ENCODE measurements at regions of chr3 and their contacts with region 1.

Region 1: GRCh38 chr3:52339612-52340011 is 23.5 kb downstream of the DNAH1 start:
- DNase-seq: peak in 13 of 14 experiments; percentile 7 to 87 (median 28)
- ATAC-seq: peak; percentile 76
- H3K4me3 ChIP-seq: no peak overlapping the region
- H3K4me3 Mint-ChIP-seq: no peak overlapping the region
- H3K27ac ChIP-seq: no peak overlapping the region
- H3K27ac Mint-ChIP-seq: no peak overlapping the region
- H3K4me1 ChIP-seq: no peaks in the 10 kb centered on the region
- H3K4me1 Mint-ChIP-seq: peaks cover 11% of the 10 kb centered on the region
- H3K27me3 ChIP-seq: no peaks in the 10 kb centered on the region
- H3K27me3 Mint-ChIP-seq: no peaks in the 10 kb centered on the region
- CTCF ChIP-seq: peak; percentile 85

Region 2: DNA sequence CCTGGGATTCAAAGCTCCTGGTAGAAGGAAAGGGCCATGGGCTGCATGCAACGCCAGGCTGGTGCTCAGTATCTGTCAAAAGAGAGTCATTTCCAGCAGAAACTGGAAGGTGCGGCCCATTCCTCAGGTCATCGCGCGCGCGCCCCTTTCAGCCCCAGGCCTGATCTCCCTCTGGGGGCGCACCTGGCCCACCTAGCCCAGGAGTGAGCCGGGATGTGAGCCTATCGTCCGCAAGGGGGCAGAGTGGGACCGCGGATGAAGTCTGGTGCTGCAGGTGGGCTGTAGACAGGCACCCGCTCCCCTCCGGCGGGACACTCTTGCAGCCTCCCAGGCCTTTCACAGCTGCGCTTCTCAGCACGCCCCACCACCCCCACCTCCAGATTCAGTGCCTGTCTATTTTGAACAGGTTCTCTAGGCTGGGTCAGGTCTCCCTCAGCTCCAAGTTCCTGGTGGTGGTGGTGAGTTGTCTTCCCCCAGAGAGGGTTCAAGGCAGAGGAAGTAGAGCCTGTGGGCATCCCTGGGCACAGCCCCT is 338.1 kb before region 1 on chr3:
- CTCF ChIA-PET with region 1: no interaction called
- POLR2A ChIA-PET with region 1: no interaction called
- intact Hi-C with region 1: loop called in 1 of 2 experiments (anchors 1 kb)
- DNase-seq: peak; percentile 78 to 92 (median 82)
- ATAC-seq: peak; percentile 99
- H3K4me3 ChIP-seq: no peak overlapping the region
- H3K4me3 Mint-ChIP-seq: peak overlapping the region; percentile 25
- H3K27ac ChIP-seq: no peak overlapping the region
- H3K27ac Mint-ChIP-seq: peak overlapping the region; percentile 20
- H3K4me1 ChIP-seq: peaks cover 22% of the 10 kb centered on the region
- H3K4me1 Mint-ChIP-seq: peaks cover 17% of the 10 kb centered on the region
- H3K27me3 ChIP-seq: no peaks in the 10 kb centered on the region
- H3K27me3 Mint-ChIP-seq: no peaks in the 10 kb centered on the region
- CTCF ChIP-seq: peak; percentile 96

Region 3: GRCh38 chr3:52225452-52226228 is 114.0 kb before region 1 on chr3 and contains the start of gene TLR9:
- CTCF ChIA-PET with region 1: interaction called, 60 read pairs
- POLR2A ChIA-PET with region 1: interaction called, 13 read pairs
- intact Hi-C with region 1: loop called (anchors 1 kb)
- DNase-seq: peak in 5 of 14 experiments; percentile 33 to 62 (median 44)
- ATAC-seq: peak; percentile 59
- H3K4me3 ChIP-seq: no peak within 1 kb of the TSS
- H3K4me3 Mint-ChIP-seq: peak within 1 kb of the TSS; percentile 73
- H3K27ac ChIP-seq: peak within 1 kb of the TSS; percentile 51 to 64
- H3K27ac Mint-ChIP-seq: peak within 1 kb of the TSS; percentile 90
- H3K4me1 ChIP-seq: peaks cover 76% of the 10 kb centered on the region
- H3K4me1 Mint-ChIP-seq: peaks cover 68% of the 10 kb centered on the region
- H3K27me3 ChIP-seq: no peaks in the 10 kb centered on the region
- H3K27me3 Mint-ChIP-seq: no peaks in the 10 kb centered on the region
- CTCF ChIP-seq: no peak
- total RNA-seq, gene TLR9: 0.08 to 0.17 TPM

Region 4: DNA sequence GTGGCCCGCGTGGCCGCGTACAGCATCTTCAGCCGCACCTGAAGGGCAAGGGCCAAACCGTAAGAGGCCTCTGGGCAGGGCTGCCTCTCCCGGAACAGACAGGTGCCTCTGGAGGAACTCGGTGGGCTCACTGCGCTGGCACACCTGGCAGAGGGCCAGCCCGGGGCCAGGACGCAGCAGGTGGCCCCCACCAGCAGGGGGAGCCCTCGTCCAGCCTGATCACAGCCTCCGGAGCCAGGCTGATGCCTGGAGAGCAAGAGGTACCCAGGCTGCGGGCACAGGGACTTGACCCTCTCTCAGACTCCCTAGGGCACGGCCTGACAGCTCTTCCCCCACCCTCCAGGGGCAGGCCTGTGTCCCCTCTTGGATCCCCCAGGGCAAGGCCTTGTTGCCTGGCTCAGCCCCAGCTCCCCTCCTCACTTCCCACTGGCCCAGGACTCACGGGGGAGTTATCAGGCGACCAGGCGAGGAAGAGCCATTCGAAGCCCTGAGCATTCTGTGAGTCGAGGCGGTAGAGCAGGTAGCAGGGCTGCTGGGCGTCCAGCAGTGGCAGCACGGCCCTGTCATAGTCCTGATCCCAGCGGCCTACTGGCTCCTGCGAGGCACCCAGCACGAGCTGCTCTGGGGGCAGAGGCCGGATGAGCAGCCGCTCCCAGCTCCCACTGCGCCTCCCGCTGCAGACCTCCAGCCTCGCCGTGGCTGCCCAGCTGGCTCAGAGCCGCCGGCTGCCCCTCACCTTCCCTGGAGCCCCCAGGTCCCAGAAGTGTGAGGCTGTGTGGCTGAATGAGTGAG is 107.9 kb before region 1 on chr3:
- CTCF ChIA-PET with region 1: interaction called, 60 read pairs
- POLR2A ChIA-PET with region 1: interaction called, 9 read pairs
- intact Hi-C with region 1: loop called (anchors 1 kb)
- DNase-seq: peak; percentile 70 to 94 (median 88)
- ATAC-seq: peak; percentile 75
- H3K4me3 ChIP-seq: no peak overlapping the region
- H3K4me3 Mint-ChIP-seq: peak overlapping the region; percentile 30
- H3K27ac ChIP-seq: peak overlapping the region in 1 of 2 donors; percentile 43
- H3K27ac Mint-ChIP-seq: peak overlapping the region; percentile 72
- H3K4me1 ChIP-seq: peaks cover 73% of the 10 kb centered on the region
- H3K4me1 Mint-ChIP-seq: peaks cover 56% of the 10 kb centered on the region
- H3K27me3 ChIP-seq: no peaks in the 10 kb centered on the region
- H3K27me3 Mint-ChIP-seq: no peaks in the 10 kb centered on the region
- CTCF ChIP-seq: peak; percentile 67

Region 5: DNA sequence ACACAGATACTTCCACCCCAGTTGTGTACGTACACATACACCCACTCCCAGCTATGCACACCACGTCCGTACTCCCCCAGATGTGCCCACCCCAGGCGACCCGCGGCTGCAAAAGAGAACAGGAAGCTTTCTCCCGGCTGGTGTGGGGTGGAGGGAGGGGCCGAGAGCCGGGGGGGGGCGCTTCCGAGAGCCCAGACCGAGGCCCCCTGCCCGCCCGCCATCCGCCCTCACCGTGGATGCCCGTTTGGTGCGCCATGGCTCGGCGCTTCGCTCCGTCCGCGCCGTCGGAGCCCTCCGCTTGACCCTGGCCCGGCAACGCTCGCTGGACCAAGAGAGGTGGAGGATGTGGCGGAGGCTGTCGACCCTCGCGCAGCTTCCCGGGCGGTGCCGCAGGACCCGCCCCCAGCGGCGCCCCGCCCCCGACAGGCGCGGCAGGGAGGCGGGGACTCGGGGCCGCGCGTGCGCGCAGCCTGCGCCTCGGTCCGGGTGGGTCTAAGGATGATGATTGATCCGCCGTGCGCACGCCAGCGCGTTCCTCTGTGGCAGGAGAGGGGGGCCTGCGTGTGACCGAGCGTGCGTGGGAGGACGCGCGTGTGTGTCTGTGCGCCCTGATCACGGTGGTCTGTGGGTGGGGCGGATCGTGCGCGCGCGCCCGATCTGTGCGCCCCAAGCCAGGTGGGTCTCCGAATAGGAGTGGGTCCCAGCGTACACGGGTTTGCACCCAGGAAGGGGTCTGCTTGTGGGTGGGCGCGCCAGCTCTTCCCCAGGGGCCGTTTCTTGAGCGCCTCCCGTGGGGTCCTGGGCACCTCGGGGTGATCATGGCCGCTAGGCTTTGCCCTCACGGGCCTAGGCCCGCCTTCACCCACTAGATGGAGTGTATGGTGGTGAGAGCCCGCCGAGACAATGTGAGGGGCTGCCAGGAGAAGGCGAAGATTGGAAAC is 100.6 kb before region 1 on chr3 and contains the start of gene TWF2:
- CTCF ChIA-PET with region 1: interaction called, 7 read pairs
- POLR2A ChIA-PET with region 1: interaction called, 10 read pairs
- intact Hi-C with region 1: no loop called
- DNase-seq: peak; percentile 69 to 93 (median 84)
- ATAC-seq: peak; percentile 79
- H3K4me3 ChIP-seq: peak within 1 kb of the TSS; percentile 99
- H3K4me3 Mint-ChIP-seq: peak within 1 kb of the TSS; percentile 99
- H3K27ac ChIP-seq: peak within 1 kb of the TSS; percentile 81 to 95
- H3K27ac Mint-ChIP-seq: peak within 1 kb of the TSS; percentile 99
- H3K4me1 ChIP-seq: peaks cover 80% of the 10 kb centered on the region
- H3K4me1 Mint-ChIP-seq: peaks cover 86% of the 10 kb centered on the region
- H3K27me3 ChIP-seq: no peaks in the 10 kb centered on the region
- H3K27me3 Mint-ChIP-seq: no peaks in the 10 kb centered on the region
- CTCF ChIP-seq: peak; percentile 63
- total RNA-seq, gene TWF2: 17.4 to 21.7 TPM

Region 6: DNA sequence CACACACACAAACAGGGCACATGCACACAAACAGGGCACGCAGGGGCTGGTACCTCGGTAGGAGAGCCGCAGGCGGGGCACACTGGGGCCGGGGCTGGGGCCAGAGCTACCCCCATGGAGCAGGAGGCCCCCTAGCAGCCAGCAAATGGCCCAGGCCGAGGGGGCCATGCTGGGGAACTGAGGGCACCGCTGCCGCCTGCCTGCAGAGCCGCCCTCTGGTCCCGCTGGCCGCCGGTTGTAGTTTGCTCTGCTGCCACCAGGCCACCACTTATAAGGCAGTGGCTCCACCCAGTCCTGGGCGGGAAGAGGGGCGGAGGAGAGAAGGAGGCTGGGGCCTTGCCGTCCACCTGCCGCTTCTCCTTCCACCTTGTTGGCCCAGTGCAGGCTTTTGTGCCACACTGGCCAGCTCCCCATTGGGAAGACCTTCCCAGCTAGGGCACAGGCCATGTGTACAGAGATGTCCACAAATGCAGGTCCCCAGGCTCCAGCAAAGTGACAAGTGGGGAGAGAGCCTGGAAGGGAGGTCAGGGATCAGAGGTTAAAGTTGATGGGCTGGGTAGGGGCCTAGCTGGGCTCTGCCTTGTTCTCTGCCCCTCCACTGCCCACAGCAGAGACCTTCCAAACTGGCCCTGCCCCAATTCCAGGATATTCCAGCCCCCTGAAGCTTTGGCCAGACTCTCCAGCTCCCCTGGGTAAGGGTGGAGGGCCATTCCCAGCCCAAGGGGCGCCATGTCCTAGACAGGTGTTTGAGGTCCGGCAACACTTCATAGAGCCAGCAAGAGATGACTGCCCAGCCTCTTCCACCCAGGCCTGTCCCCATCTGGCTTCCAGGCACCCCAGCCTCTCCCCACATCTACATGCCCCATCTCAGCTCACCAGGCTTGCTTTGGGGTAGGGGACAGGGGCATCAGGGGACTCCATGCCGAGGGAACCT is 105.5 kb after region 1 on chr3 and contains the start of gene SEMA3G:
- CTCF ChIA-PET with region 1: no interaction called
- POLR2A ChIA-PET with region 1: interaction called, 3 read pairs
- intact Hi-C with region 1: loop called in 1 of 2 experiments (anchors 2 kb)
- DNase-seq: peak; percentile 55 to 86 (median 70)
- ATAC-seq: peak; percentile 96
- H3K4me3 ChIP-seq: peak within 1 kb of the TSS; percentile 29
- H3K4me3 Mint-ChIP-seq: no peak within 1 kb of the TSS
- H3K27ac ChIP-seq: no peak within 1 kb of the TSS
- H3K27ac Mint-ChIP-seq: no peak within 1 kb of the TSS
- H3K4me1 ChIP-seq: peaks cover 28% of the 10 kb centered on the region
- H3K4me1 Mint-ChIP-seq: peaks cover 14% of the 10 kb centered on the region
- H3K27me3 ChIP-seq: no peaks in the 10 kb centered on the region
- H3K27me3 Mint-ChIP-seq: no peaks in the 10 kb centered on the region
- CTCF ChIP-seq: peak; percentile 32
- total RNA-seq, gene SEMA3G: 0.34 to 0.69 TPM

Measured in CD4-positive, alpha-beta T cell (primary cell).